Activated CD8-positive, alpha-beta memory T cell treated with anti-CD3 and anti-CD28 coated beads, Interleukin-2, amount 10 ng/mL, durations not matched to agents 7 days and 5 days (primary cell): ENCODE measurements at regions of chr3 and their contacts with region 1.

Region 1: GRCh38 chr3:149566292-149566975 is 91.4 kb downstream of the WWTR1 start:
- DNase-seq: no peak
- ATAC-seq: no peak
- H3K4me3 Mint-ChIP-seq: no peak overlapping the region
- H3K27ac Mint-ChIP-seq: no peak overlapping the region
- H3K4me1 Mint-ChIP-seq: peaks cover 9% of the 10 kb centered on the region
- H3K27me3 Mint-ChIP-seq: peaks cover 5% of the 10 kb centered on the region

Region 2: GRCh38 chr3:149342413-149343380 is 223.7 kb before region 1 on chr3:
- CTCF ChIA-PET with region 1: no interaction called
- DNase-seq: no peak
- ATAC-seq: no peak
- H3K4me3 Mint-ChIP-seq: no peak overlapping the region
- H3K27ac Mint-ChIP-seq: no peak overlapping the region
- H3K4me1 Mint-ChIP-seq: peaks cover 7% of the 10 kb centered on the region
- H3K27me3 Mint-ChIP-seq: peaks cover 50% of the 10 kb centered on the region

Region 3: GRCh38 chr3:149657926-149658733 is 91.7 kb after region 1 on chr3 and contains the start of gene WWTR1:
- CTCF ChIA-PET with region 1: interaction called, 30 read pairs
- DNase-seq: peak; percentile 79
- ATAC-seq: peak; percentile 85
- H3K4me3 Mint-ChIP-seq: peak within 1 kb of the TSS; percentile 87
- H3K27ac Mint-ChIP-seq: peak within 1 kb of the TSS; percentile 88
- H3K4me1 Mint-ChIP-seq: peaks cover 31% of the 10 kb centered on the region
- H3K27me3 Mint-ChIP-seq: peaks cover 26% of the 10 kb centered on the region
- total RNA-seq, gene WWTR1: 1.8 to 3.8 TPM

Region 4: GRCh38 chr3:149717391-149718056 is 151.1 kb after region 1 on chr3:
- CTCF ChIA-PET with region 1: interaction called, 17 read pairs
- DNase-seq: peak; percentile 61
- ATAC-seq: no peak
- H3K4me3 Mint-ChIP-seq: peak overlapping the region; percentile 10
- H3K27ac Mint-ChIP-seq: peak overlapping the region; percentile 47
- H3K4me1 Mint-ChIP-seq: peaks cover 15% of the 10 kb centered on the region
- H3K27me3 Mint-ChIP-seq: no peaks in the 10 kb centered on the region